Posterior vena cava (tissue), 2 donors: ENCODE measurements at regions of chr9 and their contacts with region 1.

Region 1: GRCh38 chr9:93801581-93802284 is 153.4 kb downstream of the BARX1 start:
- DNase-seq: no peak

Region 2: DNA sequence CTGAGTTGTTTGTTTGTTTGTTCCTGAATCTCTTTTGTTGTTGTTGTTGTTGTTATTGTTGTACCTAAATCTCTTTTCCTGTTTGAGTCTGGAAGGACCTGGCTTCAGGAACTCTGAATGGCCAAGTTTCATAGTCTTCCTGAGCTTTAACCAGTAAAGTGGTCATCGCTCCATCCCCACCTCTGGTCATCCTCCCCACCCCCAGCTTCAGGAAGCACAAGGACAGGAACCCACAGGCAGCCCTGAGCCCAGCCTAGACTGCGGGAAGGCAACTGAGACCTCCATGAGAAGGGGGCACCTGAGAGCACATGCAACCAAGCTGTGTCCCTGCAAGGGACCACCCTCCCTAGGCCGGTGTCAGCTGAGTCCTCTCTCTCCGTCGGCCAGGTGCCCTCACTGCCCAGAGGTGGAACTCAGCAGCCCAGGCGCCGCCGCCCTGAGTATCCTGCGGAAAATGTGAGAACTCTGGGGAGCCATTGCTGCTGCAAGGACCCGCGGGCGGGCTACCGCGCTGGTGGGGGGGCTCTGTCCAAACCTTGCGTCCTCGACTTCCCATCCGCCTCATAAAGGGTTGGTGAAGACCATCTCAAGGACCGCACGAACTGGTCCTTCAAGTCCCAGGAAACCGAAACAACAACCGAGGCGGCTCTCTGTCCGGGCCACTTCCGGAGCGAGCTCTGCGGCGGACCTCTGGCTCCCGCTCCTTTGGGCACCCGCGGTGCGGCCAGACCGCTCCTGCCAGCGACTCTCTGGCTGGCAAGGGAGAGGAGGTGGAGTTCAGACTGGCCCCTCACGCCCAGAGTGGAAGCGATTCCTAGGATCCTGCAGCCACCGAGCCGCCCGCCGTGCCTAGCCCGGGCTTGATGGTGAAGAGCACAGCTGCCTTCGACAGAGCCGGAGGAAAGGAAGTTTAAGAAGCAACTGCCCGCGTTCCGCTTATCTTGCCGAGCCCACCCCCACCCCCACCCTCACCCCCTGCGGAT is 149.2 kb after region 1 on chr9:
- intact Hi-C with region 1: loop called in 1 of 2 experiments (anchors 1 kb)
- DNase-seq: peak; percentile 83